ENCODE measurements at regions of chr3 and their contacts with region 1.

Region 1: GRCh38 chr3:165185707-165186327 is 10.4 kb downstream of the SLITRK3 start:
- DNase-seq: peak; percentile 73
- ATAC-seq: peak; percentile 99
- H3K4me3 ChIP-seq: no peak overlapping the region
- H3K27ac ChIP-seq: no peak overlapping the region
- H3K4me1 ChIP-seq: no peaks in the 10 kb centered on the region
- H3K27me3 ChIP-seq: no peaks in the 10 kb centered on the region
- CTCF ChIP-seq: peak; percentile 93

Region 2: DNA sequence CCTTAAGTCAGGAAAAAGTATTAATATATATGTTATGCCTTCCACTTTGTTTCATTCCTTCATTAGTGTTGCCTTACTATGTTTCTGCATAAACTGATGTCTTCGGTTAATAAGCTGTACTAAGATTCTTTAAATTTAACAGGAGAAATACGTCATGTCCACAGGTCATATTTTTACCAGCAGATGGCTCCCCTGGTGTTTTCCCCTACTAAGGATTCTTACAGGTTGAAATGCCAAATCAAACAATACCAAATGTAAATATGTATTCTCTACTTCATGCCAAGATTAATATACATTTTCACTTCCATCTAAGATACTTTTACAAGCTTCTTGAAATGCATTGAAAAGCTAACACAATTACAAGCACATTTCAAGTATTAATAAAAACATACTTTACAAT is 1709.6 kb before region 1 on chr3:
- CTCF ChIA-PET with region 1: no interaction called
- POLR2A ChIA-PET with region 1: no interaction called
- intact Hi-C with region 1: loop called (anchors 5 kb)
- DNase-seq: peak; percentile 75
- ATAC-seq: peak; percentile 89
- H3K4me3 ChIP-seq: no peak overlapping the region
- H3K27ac ChIP-seq: no peak overlapping the region
- H3K4me1 ChIP-seq: no peaks in the 10 kb centered on the region
- H3K27me3 ChIP-seq: no peaks in the 10 kb centered on the region
- CTCF ChIP-seq: peak; percentile 78

Region 3: DNA sequence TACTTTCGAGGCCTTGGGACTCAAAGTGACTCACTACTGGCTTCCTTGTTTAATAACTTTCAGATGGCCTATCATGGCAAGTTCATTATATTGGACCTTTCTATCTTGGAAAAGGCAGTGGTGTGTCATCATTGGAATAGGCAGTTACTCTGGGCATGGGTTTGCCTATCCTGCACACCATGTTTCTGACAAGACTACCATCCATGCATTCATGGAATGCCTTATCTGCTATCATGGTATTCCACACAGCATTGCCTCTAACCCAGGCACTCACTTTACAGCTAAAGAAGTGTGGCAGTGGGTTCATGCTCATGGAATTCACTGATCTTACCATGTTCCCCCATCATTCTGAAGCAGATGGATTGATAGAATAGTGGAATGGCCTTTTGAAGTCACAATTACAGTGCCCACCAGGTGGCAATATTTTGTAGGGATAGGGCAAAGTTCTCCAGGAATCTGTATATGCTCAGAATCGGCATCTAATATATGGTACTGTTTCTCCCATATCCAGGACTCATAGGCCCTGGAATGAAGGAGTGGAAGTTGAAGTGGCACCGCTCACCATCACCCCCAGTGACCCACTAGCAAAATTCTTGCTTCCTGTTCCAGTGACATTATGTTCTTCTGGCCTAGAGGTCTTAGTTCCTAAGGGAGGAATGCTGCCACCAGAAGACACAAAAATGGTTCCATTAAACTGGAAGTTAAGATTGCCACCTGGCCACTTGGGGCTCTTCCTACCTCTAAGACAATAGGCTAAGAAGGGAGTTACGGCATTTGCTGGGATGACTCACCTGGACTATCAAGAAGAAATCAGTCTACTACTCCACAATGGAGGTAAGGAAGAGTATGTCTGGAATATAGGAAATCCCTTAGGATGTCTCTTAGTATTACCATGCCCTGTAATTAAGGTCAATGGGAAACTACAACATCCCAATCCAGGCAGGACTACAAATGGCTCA is 1268.9 kb before region 1 on chr3:
- CTCF ChIA-PET with region 1: no interaction called
- POLR2A ChIA-PET with region 1: no interaction called
- intact Hi-C with region 1: loop called (anchors 10 kb)
- DNase-seq: peak; percentile 62
- ATAC-seq: peak; percentile 68
- H3K4me3 ChIP-seq: no peak overlapping the region
- H3K27ac ChIP-seq: no peak overlapping the region
- H3K4me1 ChIP-seq: no peaks in the 10 kb centered on the region
- H3K27me3 ChIP-seq: no peaks in the 10 kb centered on the region
- CTCF ChIP-seq: peak; percentile 70

Region 4: GRCh38 chr3:163957087-163957486 is 1228.7 kb before region 1 on chr3:
- CTCF ChIA-PET with region 1: no interaction called
- POLR2A ChIA-PET with region 1: no interaction called
- intact Hi-C with region 1: loop called (anchors 1 kb)
- DNase-seq: no peak
- ATAC-seq: no peak
- H3K4me3 ChIP-seq: no peak overlapping the region
- H3K27ac ChIP-seq: no peak overlapping the region
- H3K4me1 ChIP-seq: no peaks in the 10 kb centered on the region
- H3K27me3 ChIP-seq: no peaks in the 10 kb centered on the region
- CTCF ChIP-seq: peak; percentile 38; the same call in 1 of the 2 replicates

Region 5: DNA sequence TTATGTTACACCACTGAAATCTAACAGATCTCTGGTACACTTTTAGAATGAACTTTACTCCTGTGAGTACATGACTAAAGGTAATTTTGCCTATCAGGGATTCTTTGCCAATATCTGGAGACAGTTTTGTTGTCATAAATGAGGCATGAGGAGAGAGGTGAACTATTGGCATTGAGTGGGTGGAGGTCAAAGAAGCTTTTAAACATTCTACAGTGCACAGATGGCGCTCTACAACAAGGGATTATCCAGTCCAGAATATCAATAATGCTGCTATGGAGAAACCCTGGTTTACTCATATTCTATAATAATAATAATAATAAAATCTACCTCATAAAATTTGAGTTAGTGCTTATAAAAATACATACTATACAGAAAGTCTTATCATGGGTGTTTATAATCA is 809.8 kb before region 1 on chr3:
- CTCF ChIA-PET with region 1: no interaction called
- POLR2A ChIA-PET with region 1: no interaction called
- intact Hi-C with region 1: loop called (anchors 1 kb)
- DNase-seq: peak; percentile 16
- ATAC-seq: peak; percentile 67
- H3K4me3 ChIP-seq: no peak overlapping the region
- H3K27ac ChIP-seq: no peak overlapping the region
- H3K4me1 ChIP-seq: peaks cover 4% of the 10 kb centered on the region; the same call in 1 of the 2 replicates
- H3K27me3 ChIP-seq: no peaks in the 10 kb centered on the region
- CTCF ChIP-seq: peak; percentile 20; the same call in 1 of the 2 replicates

Region 6: GRCh38 chr3:164418414-164418813 is 767.4 kb before region 1 on chr3:
- CTCF ChIA-PET with region 1: no interaction called
- POLR2A ChIA-PET with region 1: no interaction called
- intact Hi-C with region 1: loop called (anchors 2 kb)
- DNase-seq: no peak
- ATAC-seq: peak; percentile 53; the same call in 1 of the 2 replicates
- H3K4me3 ChIP-seq: no peak overlapping the region
- H3K27ac ChIP-seq: no peak overlapping the region
- H3K4me1 ChIP-seq: no peaks in the 10 kb centered on the region
- H3K27me3 ChIP-seq: no peaks in the 10 kb centered on the region
- CTCF ChIP-seq: no peak

Region 7: DNA sequence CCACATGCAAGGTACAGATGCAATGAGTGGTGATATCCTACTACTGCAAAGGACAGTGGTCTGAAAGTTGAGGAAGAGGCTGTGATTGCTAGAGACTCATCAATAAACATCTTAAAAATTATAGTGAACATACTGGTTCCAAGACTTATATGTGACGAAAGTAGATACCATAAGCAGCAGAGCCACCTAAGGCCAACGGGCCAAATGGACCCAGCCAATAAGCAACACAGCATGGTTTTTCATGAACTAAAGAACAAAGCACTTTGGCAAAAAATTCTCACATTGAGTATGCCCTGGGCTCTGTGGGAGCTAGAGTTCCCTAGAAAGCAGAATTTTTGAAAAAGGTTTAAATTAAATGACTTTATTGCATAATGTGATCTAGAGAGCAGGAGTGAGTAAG is 379.6 kb before region 1 on chr3:
- CTCF ChIA-PET with region 1: no interaction called
- POLR2A ChIA-PET with region 1: no interaction called
- intact Hi-C with region 1: loop called (anchors 10 kb)
- DNase-seq: no peak
- ATAC-seq: peak; percentile 62; the same call in 1 of the 2 replicates
- H3K4me3 ChIP-seq: no peak overlapping the region
- H3K27ac ChIP-seq: no peak overlapping the region
- H3K4me1 ChIP-seq: no peaks in the 10 kb centered on the region
- H3K27me3 ChIP-seq: no peaks in the 10 kb centered on the region
- CTCF ChIP-seq: peak; percentile 33; the same call in 1 of the 2 replicates

Region 8: DNA sequence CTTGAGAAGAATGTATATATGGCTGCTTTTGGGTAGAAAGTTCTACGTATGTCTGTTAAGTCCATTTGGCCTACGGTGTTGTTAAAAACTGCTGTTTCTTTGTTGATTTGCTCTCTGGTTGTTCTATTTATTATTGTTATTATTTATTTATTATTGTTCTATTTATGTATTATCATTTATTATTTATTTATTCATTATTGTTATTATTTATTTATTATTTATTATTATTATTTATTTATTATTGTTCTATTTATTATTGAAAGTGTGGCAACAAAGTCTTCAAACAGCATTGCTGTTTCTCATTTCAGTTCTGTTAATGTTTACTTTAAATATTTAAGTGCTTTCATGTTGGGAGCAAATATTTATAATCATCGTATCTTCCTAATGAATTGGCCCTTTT is 174.3 kb before region 1 on chr3:
- CTCF ChIA-PET with region 1: no interaction called
- POLR2A ChIA-PET with region 1: no interaction called
- intact Hi-C with region 1: no loop called
- DNase-seq: no peak
- ATAC-seq: no peak
- H3K4me3 ChIP-seq: no peak overlapping the region
- H3K27ac ChIP-seq: no peak overlapping the region
- H3K4me1 ChIP-seq: no peaks in the 10 kb centered on the region
- H3K27me3 ChIP-seq: no peaks in the 10 kb centered on the region
- CTCF ChIP-seq: no peak

Region 9: DNA sequence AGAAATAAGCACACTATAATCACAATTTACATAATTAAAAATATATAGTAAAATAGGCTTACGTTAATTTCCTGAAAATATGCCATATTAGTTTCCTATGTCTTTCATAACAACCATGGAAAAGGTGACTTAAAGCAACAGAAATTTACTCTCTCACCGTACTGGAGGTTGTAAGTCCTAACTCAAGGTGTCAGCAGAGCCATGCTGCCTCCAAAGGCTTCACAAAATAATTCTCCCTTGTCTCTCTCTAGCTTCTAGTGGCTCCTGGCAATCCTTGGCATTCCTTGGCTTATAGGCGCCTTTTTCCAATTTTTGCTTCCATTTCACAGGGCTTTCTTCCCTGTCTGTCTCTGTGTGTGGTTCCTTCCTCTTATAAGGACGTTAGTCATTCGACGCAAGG is 115.1 kb before region 1 on chr3:
- CTCF ChIA-PET with region 1: no interaction called
- POLR2A ChIA-PET with region 1: no interaction called
- intact Hi-C with region 1: no loop called
- DNase-seq: no peak
- ATAC-seq: no peak
- H3K4me3 ChIP-seq: no peak overlapping the region
- H3K27ac ChIP-seq: no peak overlapping the region
- H3K4me1 ChIP-seq: no peaks in the 10 kb centered on the region
- H3K27me3 ChIP-seq: no peaks in the 10 kb centered on the region
- CTCF ChIP-seq: no peak

Measured in PC-3 (cell line).